ENCODE measurements at regions of chr12 and their contacts with region 1.

Region 1: GRCh38 chr12:45381351-45381750 is 165.5 kb downstream of the ANO6 start:
- DNase-seq: no peak
- H3K4me3 ChIP-seq: no peak overlapping the region
- H3K27ac ChIP-seq: no peak overlapping the region
- H3K4me1 ChIP-seq: no peaks in the 10 kb centered on the region
- H3K27me3 ChIP-seq: no peaks in the 10 kb centered on the region
- CTCF ChIP-seq: no peak
- EP300 ChIP-seq: no peak
- POLR2A ChIP-seq: no peak

Region 2: DNA sequence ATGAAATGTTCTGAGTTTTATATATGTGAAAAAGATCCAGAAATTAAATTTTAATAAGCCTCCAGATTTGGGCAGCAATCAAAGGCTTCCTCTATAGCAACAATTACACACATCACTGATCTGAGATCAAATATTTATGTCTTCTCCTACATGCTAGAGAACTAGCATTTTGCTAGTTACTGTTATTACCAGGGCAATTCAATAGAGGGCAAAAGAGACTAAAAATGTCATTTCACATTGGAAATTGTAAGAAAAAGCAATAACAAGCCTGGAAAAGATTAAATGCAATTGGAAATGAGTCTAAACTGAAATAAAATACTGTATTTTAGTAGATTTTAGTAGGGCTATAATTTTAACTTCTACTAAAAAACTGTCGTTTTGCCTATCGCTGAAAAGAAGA is 198.1 kb before region 1 on chr12:
- intact Hi-C with region 1: loop called (anchors 5 kb)
- DNase-seq: peak in 1 of 2 donors; percentile 22
- H3K4me3 ChIP-seq: no peak overlapping the region
- H3K27ac ChIP-seq: no peak overlapping the region
- H3K4me1 ChIP-seq: no peaks in the 10 kb centered on the region
- H3K27me3 ChIP-seq: no peaks in the 10 kb centered on the region
- CTCF ChIP-seq: peak in 2 of 7 experiments; percentile 15 to 27
- EP300 ChIP-seq: no peak
- POLR2A ChIP-seq: no peak

Measured in stomach (tissue), 19 donors.